HepG2 (cell line): ENCODE measurements at regions of chr11 and their contacts with region 1.

Region 1: GRCh38 chr11:17598700-17599459 is 51.8 kb downstream of the OTOG start:
- DNase-seq: peak; percentile 37
- ATAC-seq: peak; percentile 94
- H3K4me3 ChIP-seq: no peak overlapping the region
- H3K27ac ChIP-seq: no peak overlapping the region
- H3K4me1 ChIP-seq: no peaks in the 10 kb centered on the region
- H3K27me3 ChIP-seq: peaks cover 3 to 18% of the 10 kb centered on the region in 2 experiments; a peak in 2 of 5 replicates
- CTCF ChIP-seq: peak; percentile 95
- EP300 ChIP-seq: no peak
- POLR2A ChIP-seq: no peak
- RAD21 ChIP-seq: peak; percentile 84

Region 2: GRCh38 chr11:17722000-17722643 is 123.2 kb after region 1 on chr11:
- CTCF ChIA-PET with region 1: interaction called, 3 read pairs
- POLR2A ChIA-PET with region 1: no interaction called
- in situ Hi-C with region 1: loop called (anchors 5 kb)
- intact Hi-C with region 1: no loop called
- DNase-seq: no peak
- ATAC-seq: peak; percentile 37; the same call in 2 of the 3 replicates
- H3K4me3 ChIP-seq: no peak overlapping the region
- H3K27ac ChIP-seq: no peak overlapping the region
- H3K4me1 ChIP-seq: no peaks in the 10 kb centered on the region; the same call in 1 of the 2 replicates
- H3K27me3 ChIP-seq: peaks cover 11 to 57% of the 10 kb centered on the region in 2 experiments
- CTCF ChIP-seq: peak; percentile 39
- EP300 ChIP-seq: no peak
- POLR2A ChIP-seq: no peak
- RAD21 ChIP-seq: no peak

Region 3: DNA sequence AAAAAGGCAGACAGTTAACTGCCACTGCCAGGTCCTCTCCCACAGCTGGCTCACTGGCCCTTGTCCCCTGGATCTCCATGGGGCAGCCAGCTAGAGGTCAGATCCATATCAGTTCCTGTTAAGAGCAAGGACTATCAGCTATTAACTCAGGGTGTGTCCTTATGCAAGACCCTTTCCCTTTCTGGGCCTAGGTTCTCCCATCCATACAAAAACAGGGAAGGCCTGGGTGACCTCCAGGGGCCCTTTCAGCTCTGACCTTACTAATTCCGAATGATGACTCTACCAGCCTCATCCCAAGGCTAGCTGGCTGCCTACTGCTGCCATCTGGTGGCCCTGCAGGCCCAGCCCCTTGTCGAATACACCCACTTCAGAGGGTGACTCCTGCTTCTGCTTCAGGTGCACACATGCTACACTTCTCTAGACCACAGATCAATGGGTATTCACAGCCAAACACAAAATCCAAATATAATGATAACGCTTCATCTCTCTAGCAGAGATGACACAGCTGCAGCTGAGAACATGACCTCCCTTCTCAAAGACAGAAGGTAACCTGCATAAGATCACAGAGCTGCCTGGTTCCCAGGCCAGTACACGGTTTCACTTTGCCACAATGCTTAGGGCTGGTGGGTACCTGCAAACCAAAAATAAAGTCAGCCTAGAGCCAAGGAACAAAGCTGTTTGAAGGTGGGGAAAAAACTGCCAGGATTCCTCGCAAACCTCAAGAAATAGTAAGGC is 379.8 kb after region 1 on chr11:
- CTCF ChIA-PET with region 1: interaction called, 5 read pairs
- POLR2A ChIA-PET with region 1: no interaction called
- in situ Hi-C with region 1: loop called (anchors 10 kb)
- intact Hi-C with region 1: loop called (anchors 2 kb)
- DNase-seq: peak; percentile 59
- ATAC-seq: peak; percentile 95
- H3K4me3 ChIP-seq: no peak overlapping the region
- H3K27ac ChIP-seq: no peak overlapping the region
- H3K4me1 ChIP-seq: peaks cover 40% of the 10 kb centered on the region
- H3K27me3 ChIP-seq: no peaks in the 10 kb centered on the region
- CTCF ChIP-seq: peak; percentile 90
- EP300 ChIP-seq: no peak
- POLR2A ChIP-seq: no peak
- RAD21 ChIP-seq: peak; percentile 78